ENCODE measurements at regions of chr3 and their contacts with region 1.

Region 1: GRCh38 chr3:120198305-120198878 is 86.6 kb downstream of the GPR156 start:
- DNase-seq: peak in 1 of 2 experiments; percentile 46
- H3K4me3 ChIP-seq: no peak overlapping the region
- H3K4me3 Mint-ChIP-seq: no peak overlapping the region
- H3K27ac Mint-ChIP-seq: no peak overlapping the region
- H3K4me1 ChIP-seq: no peaks in the 10 kb centered on the region
- H3K4me1 Mint-ChIP-seq: no peaks in the 10 kb centered on the region
- H3K27me3 ChIP-seq: no peaks in the 10 kb centered on the region
- H3K27me3 Mint-ChIP-seq: no peaks in the 10 kb centered on the region
- CTCF ChIP-seq: peak; percentile 12 to 18

Region 2: DNA sequence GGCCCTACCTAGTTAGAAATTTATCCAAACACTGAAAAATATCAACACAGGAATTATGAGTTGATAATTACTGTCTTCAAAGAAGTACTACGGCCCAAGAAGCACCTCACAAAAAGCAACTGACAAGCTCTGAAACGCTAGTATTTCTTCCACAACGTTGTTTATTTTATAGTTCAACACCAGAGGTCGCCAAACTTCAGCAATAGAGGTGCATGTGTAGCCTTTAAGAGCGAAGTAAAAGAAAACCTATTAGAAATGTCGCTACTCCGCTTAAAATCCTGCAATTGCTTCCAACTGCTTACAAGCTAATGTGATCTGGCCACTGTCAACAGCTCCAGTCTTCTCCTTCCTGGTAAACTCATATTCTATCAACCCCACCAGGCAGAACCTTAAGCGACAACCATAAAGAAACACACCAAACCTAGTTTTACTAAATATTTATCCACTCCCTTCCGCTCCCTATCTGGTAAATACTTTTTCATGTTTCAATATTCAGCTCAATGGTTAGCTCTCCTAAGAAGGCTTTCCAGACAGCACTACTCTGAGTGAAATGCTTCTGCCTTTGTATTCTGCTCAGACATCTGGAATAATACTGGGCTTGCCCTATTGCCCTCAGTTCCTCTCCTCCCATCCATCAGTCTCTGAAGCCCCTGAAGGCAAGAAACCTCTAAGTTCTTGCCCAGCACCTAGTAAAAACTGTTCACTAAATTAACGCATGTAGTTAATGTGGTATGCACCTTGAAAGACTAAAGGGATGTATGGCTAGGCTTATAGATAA is 306.3 kb before region 1 on chr3:
- CTCF ChIA-PET with region 1: no interaction called
- POLR2A ChIA-PET with region 1: no interaction called
- intact Hi-C with region 1: loop called (anchors 1 kb)
- DNase-seq: peak in 1 of 2 experiments; percentile 50
- H3K4me3 ChIP-seq: no peak overlapping the region
- H3K4me3 Mint-ChIP-seq: no peak overlapping the region
- H3K27ac Mint-ChIP-seq: no peak overlapping the region
- H3K4me1 ChIP-seq: no peaks in the 10 kb centered on the region
- H3K4me1 Mint-ChIP-seq: no peaks in the 10 kb centered on the region
- H3K27me3 ChIP-seq: no peaks in the 10 kb centered on the region
- H3K27me3 Mint-ChIP-seq: no peaks in the 10 kb centered on the region
- CTCF ChIP-seq: peak; percentile 50 to 59

Region 3: GRCh38 chr3:120137547-120137946 is 60.8 kb before region 1 on chr3:
- CTCF ChIA-PET with region 1: no interaction called
- POLR2A ChIA-PET with region 1: no interaction called
- intact Hi-C with region 1: loop called (anchors 1 kb)
- DNase-seq: no peak
- H3K4me3 ChIP-seq: no peak overlapping the region
- H3K4me3 Mint-ChIP-seq: no peak overlapping the region
- H3K27ac Mint-ChIP-seq: no peak overlapping the region
- H3K4me1 ChIP-seq: peaks cover 3% of the 10 kb centered on the region; the same call in 1 of the 2 replicates
- H3K4me1 Mint-ChIP-seq: peaks cover 18% of the 10 kb centered on the region
- H3K27me3 ChIP-seq: no peaks in the 10 kb centered on the region
- H3K27me3 Mint-ChIP-seq: no peaks in the 10 kb centered on the region
- CTCF ChIP-seq: peak in 1 of 2 experiments; percentile 31